ENCODE measurements at regions of chr17 and their contacts with region 1.

Region 1: DNA sequence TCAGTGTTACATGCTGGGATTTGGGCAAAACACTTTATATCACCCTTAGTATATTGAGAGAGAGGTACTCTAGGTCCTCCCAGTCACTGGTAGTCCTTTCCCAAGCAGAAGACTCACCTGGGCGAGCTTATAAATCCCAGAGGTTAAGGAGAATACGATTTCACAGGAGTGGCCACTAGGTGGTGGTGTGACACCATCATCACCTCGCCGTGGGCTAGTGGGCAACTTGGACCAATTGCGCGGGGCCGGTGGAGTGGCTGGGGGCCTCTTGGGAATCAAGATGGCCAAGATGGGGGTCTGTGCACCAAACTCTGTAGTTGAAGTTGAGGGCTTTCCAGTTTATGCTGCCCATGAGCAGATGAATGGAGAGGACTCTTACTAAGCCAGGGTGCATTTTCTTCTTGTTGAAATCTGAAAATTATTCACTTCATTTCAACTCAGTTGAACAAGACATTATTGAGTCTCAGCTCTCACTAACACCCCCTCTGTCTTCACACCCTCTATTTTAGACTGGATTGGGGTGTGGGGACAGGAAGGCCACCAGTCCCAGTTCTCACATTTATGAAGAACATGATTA is 38.2 kb upstream of the PIRT start:
- DNase-seq: peak; percentile 41
- ATAC-seq: peak; percentile 38; the same call in 1 of the 2 replicates
- H3K4me3 ChIP-seq: no peak overlapping the region
- H3K27ac ChIP-seq: no peak overlapping the region
- H3K4me1 ChIP-seq: no peaks in the 10 kb centered on the region
- H3K27me3 ChIP-seq: no peaks in the 10 kb centered on the region
- CTCF ChIP-seq: peak; percentile 67

Region 2: GRCh38 chr17:10920558-10921108 is 44.6 kb after region 1 on chr17:
- CTCF ChIA-PET with region 1: no interaction called
- POLR2A ChIA-PET with region 1: no interaction called
- intact Hi-C with region 1: no loop called
- DNase-seq: no peak
- ATAC-seq: no peak
- H3K4me3 ChIP-seq: no peak overlapping the region
- H3K27ac ChIP-seq: no peak overlapping the region
- H3K4me1 ChIP-seq: no peaks in the 10 kb centered on the region
- H3K27me3 ChIP-seq: no peaks in the 10 kb centered on the region
- CTCF ChIP-seq: no peak

Region 3: GRCh38 chr17:11144358-11145233 is 268.5 kb after region 1 on chr17:
- CTCF ChIA-PET with region 1: interaction called, 7 read pairs
- POLR2A ChIA-PET with region 1: no interaction called
- intact Hi-C with region 1: loop called (anchors 5 kb)
- DNase-seq: peak; percentile 57
- ATAC-seq: no peak
- H3K4me3 ChIP-seq: no peak overlapping the region
- H3K27ac ChIP-seq: no peak overlapping the region
- H3K4me1 ChIP-seq: no peaks in the 10 kb centered on the region
- H3K27me3 ChIP-seq: no peaks in the 10 kb centered on the region
- CTCF ChIP-seq: peak; percentile 67

Region 4: GRCh38 chr17:11935734-11936406 is 1059.8 kb after region 1 on chr17:
- CTCF ChIA-PET with region 1: no interaction called
- POLR2A ChIA-PET with region 1: no interaction called
- intact Hi-C with region 1: loop called (anchors 2 kb)
- DNase-seq: peak; percentile 92
- ATAC-seq: no peak
- H3K4me3 ChIP-seq: no peak overlapping the region
- H3K27ac ChIP-seq: no peak overlapping the region
- H3K4me1 ChIP-seq: no peaks in the 10 kb centered on the region
- H3K27me3 ChIP-seq: peaks cover 32% of the 10 kb centered on the region
- CTCF ChIP-seq: peak; percentile 99